Activated CD4-positive, alpha-beta T cell treated with anti-CD3 and anti-CD28 coated beads, Interleukin-2, amount 10 ng/mL, durations not matched to agents 7 days and 5 days (primary cell): ENCODE measurements at regions of chr5 and their contacts with region 1.

Region 1: DNA sequence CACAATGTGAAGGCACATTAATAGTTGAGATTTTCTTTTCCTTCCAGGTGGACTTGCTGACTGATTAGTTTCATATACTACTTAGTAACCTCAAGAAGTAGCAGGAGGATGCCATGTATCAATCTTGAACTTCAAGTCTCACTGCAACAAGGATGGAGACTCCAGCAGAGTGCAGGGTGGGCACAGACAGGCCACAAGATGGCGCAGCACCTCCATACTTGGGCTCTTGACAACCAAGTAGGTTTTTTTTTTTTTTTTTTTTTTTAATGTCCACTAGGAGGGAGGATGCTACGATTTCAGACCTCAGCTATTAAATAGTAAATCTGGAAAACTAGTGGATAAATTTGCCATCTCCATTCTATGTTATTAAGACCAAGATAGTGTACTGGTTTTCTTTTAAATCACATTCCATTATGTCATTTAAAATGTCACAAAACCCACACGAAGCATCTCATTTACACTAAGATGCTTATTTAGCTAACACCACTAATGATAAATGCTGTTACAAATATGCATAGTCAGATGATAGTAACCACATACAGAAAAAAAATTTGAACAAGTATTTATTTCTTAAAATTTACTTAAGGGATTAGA is 58.6 kb downstream of the IL6ST start:
- DNase-seq: peak; percentile 79
- H3K4me3 Mint-ChIP-seq: no peak overlapping the region
- H3K27ac Mint-ChIP-seq: no peak overlapping the region
- H3K4me1 Mint-ChIP-seq: peaks cover 3% of the 10 kb centered on the region
- H3K27me3 Mint-ChIP-seq: no peaks in the 10 kb centered on the region

Region 2: DNA sequence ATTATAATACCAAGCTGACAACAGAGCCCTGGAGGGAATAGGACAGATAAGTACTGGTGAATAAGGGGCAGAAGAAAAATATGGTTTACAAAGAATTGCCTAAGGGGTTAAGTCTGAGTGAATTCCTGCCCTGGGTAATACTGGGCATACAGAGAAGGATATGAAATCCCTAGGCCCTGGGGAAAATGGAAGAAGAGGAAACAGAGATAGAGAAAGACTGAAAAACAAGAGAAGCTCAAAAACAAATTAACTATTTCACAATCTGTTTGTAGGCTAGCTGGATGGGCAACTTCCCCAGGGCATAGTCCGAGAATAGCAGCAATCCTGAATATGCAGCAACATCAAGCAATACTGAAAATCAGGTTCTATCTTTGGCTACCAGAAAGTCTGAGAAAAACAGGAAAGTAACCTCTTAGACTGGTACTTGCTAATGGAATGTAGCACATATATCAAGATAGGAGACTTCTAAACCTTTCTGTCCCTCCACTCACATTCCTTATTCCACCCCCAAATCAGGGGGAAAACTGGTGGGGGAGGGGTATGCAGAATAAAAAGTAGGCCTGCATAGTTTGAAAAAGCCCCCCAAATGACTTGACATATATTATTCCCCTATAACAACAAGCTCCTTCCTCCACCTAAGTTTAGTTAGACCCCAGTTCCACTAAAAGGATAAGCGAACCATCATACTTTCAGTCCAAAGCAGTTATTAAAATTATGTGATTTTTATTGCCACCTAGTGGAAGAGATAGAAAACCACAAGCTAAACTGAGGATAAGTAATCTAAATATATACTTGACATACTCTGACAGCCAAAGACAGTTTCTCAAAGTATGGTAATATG is 244.7 kb before region 1 on chr5:
- CTCF ChIA-PET with region 1: no interaction called
- POLR2A ChIA-PET with region 1: no interaction called
- DNase-seq: no peak
- H3K4me3 Mint-ChIP-seq: no peak overlapping the region
- H3K27ac Mint-ChIP-seq: no peak overlapping the region
- H3K4me1 Mint-ChIP-seq: peaks cover 8% of the 10 kb centered on the region
- H3K27me3 Mint-ChIP-seq: no peaks in the 10 kb centered on the region

Region 3: GRCh38 chr5:55923177-55923771 is 12.9 kb before region 1 on chr5:
- CTCF ChIA-PET with region 1: interaction called, 15 read pairs
- POLR2A ChIA-PET with region 1: no interaction called
- DNase-seq: no peak
- H3K4me3 Mint-ChIP-seq: peak overlapping the region; percentile 80
- H3K27ac Mint-ChIP-seq: peak overlapping the region; percentile 89
- H3K4me1 Mint-ChIP-seq: peaks cover 35% of the 10 kb centered on the region
- H3K27me3 Mint-ChIP-seq: no peaks in the 10 kb centered on the region

Region 4: GRCh38 chr5:56190497-56190896 is 254.3 kb after region 1 on chr5:
- CTCF ChIA-PET with region 1: interaction called, 11 read pairs
- POLR2A ChIA-PET with region 1: no interaction called
- DNase-seq: no peak
- H3K4me3 Mint-ChIP-seq: no peak overlapping the region
- H3K27ac Mint-ChIP-seq: no peak overlapping the region
- H3K4me1 Mint-ChIP-seq: peaks cover 5% of the 10 kb centered on the region
- H3K27me3 Mint-ChIP-seq: no peaks in the 10 kb centered on the region

Region 5: GRCh38 chr5:56200856-56201666 is 264.9 kb after region 1 on chr5:
- CTCF ChIA-PET with region 1: interaction called, 11 read pairs
- POLR2A ChIA-PET with region 1: no interaction called
- DNase-seq: peak; percentile 75
- H3K4me3 Mint-ChIP-seq: no peak overlapping the region
- H3K27ac Mint-ChIP-seq: no peak overlapping the region
- H3K4me1 Mint-ChIP-seq: peaks cover 22% of the 10 kb centered on the region
- H3K27me3 Mint-ChIP-seq: no peaks in the 10 kb centered on the region